ENCODE measurements at regions of chr13 and their contacts with region 1.

Region 1: DNA sequence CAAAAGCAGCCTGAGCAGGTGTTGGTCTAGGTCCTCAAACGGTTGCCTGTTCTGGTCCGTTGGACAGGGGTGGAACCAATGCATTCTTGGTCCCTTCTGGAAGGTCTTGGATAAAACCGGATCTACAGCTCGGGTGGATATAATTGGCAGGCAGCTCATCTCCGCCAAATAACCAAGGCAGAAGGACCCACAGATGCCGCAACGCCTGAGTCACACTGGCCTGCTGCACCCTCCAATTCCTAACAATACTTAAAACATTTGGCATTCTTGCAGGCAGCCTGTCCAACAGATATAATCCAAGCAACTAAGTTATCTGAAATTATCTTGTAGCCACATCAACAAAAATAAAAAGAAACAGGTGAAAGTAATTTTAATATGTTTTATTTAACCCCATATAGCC is 59.0 kb upstream of the FGF14 start:
- DNase-seq: no peak
- H3K4me3 ChIP-seq: no peak overlapping the region
- H3K27ac ChIP-seq: peak overlapping the region in 1 of 2 experiments; percentile 53; a peak in 1 of 4 replicates
- H3K4me1 ChIP-seq: peaks cover 6 to 7% of the 10 kb centered on the region in 2 experiments; a peak in 3 of 4 replicates
- H3K27me3 ChIP-seq: no peaks in the 10 kb centered on the region
- CTCF ChIP-seq: no peak
- EP300 ChIP-seq: no peak
- RAD21 ChIP-seq: no peak

Region 2: DNA sequence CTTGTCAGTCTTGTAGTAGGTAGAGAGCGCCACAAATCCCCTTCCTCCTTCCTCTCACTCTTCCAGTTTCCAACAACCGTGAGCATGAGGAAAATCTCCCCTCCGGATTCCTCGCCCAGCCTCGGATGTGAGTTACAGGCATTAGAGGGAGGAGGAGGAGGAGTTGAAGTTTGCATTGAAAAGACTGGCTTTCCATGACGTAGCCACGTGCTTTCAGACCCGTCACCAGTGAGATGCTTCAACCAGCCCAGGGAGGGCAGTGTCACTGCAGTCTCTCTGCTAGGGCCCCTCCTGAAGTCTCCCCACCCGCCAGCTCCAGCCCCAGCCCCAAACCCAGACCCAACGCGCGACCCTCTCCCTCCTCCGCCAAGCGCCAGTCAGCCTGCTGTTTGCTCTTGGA is 58.5 kb before region 1 on chr13:
- CTCF ChIA-PET with region 1: interaction called, 10 read pairs
- POLR2A ChIA-PET with region 1: no interaction called
- DNase-seq: peak; percentile 88
- H3K4me3 ChIP-seq: peak overlapping the region; percentile 67 to 83
- H3K27ac ChIP-seq: peak overlapping the region in 1 of 2 experiments; percentile 96; a peak in 2 of 4 replicates
- H3K4me1 ChIP-seq: peaks cover 0 to under 1% of the 10 kb centered on the region in 2 experiments; a peak in 2 of 4 replicates
- H3K27me3 ChIP-seq: no peaks in the 10 kb centered on the region
- CTCF ChIP-seq: peak; percentile 30
- EP300 ChIP-seq: no peak; a peak in 1 of 4 replicates
- RAD21 ChIP-seq: peak; percentile 62

Measured in SK-N-SH (cell line).